Activated B cell treated with CpG ODN at 0.5 μM for 24 hours (primary cell): ENCODE measurements at regions of chr10 and their contacts with region 1.

Region 1: GRCh38 chr10:49538381-49539319 is at the start of gene ERCC6:
- DNase-seq: peak; percentile 92
- ATAC-seq: peak; percentile 82
- H3K4me3 Mint-ChIP-seq: peak within 1 kb of the TSS; percentile 93
- H3K27ac Mint-ChIP-seq: peak within 1 kb of the TSS; percentile 91
- H3K4me1 Mint-ChIP-seq: peaks cover 51% of the 10 kb centered on the region
- H3K27me3 Mint-ChIP-seq: peaks cover 17% of the 10 kb centered on the region
- CTCF ChIP-seq: no peak
- total RNA-seq, gene ERCC6: 37.4 and 46.2 TPM in 2 replicates

Region 2: GRCh38 chr10:48670978-48671913 is 867.4 kb before region 1 on chr10:
- CTCF ChIA-PET with region 1: no interaction called
- POLR2A ChIA-PET with region 1: no interaction called
- intact Hi-C with region 1: loop called (anchors 5 kb)
- DNase-seq: peak; percentile 88
- ATAC-seq: peak; percentile 68
- H3K4me3 Mint-ChIP-seq: peak overlapping the region; percentile 74
- H3K27ac Mint-ChIP-seq: peak overlapping the region; percentile 98
- H3K4me1 Mint-ChIP-seq: peaks cover 76% of the 10 kb centered on the region
- H3K27me3 Mint-ChIP-seq: no peaks in the 10 kb centered on the region
- CTCF ChIP-seq: no peak

Region 3: GRCh38 chr10:49518982-49519578 is 19.6 kb before region 1 on chr10:
- CTCF ChIA-PET with region 1: interaction called, 3 read pairs
- POLR2A ChIA-PET with region 1: interaction called, 4 read pairs
- intact Hi-C with region 1: loop called (anchors 1 kb)
- DNase-seq: no peak
- ATAC-seq: peak; percentile 66
- H3K4me3 Mint-ChIP-seq: no peak overlapping the region
- H3K27ac Mint-ChIP-seq: no peak overlapping the region
- H3K4me1 Mint-ChIP-seq: peaks cover 7% of the 10 kb centered on the region
- H3K27me3 Mint-ChIP-seq: no peaks in the 10 kb centered on the region
- CTCF ChIP-seq: no peak

Region 4: DNA sequence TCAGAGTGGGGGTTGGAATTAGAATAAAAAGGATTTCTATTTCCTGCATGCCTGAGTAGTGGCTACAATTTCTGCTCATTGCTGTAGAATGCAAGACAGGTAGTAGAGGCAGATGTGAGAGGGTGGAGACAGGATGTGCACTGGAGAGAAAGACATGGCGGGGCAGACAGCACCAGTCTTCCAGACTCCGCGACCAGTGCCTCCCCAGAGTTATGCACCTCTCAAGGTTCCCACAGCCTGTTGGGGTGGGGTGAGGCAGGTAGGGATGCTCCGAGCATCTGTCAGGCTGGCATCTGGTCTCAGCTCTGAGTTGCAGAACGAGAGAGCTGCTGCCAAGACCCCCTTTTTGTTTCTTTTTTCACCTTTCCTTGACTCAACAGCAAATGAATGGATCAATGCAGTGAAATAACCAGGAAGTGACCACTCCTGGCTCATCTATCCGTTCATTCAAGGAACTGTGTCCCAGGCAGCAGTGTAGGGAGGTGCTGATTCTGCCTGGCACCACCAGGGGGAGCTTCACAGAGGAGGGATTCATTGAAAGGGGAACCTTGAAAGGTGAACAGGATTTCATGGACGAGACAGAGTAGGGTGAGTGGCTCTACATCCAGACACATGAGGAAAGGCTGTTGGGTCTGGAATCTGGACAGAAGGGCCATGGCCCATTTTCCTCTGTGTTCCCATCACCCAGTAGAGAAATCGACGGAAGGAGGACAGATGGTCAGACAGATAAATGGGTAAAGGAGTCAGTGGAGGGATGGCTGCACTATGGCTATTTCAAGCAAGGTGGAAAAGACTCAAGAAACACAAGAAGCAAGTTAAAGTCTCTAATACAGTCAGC is 54.3 kb after region 1 on chr10:
- CTCF ChIA-PET with region 1: interaction called, 8 read pairs
- POLR2A ChIA-PET with region 1: interaction called, 4 read pairs
- intact Hi-C with region 1: loop called (anchors 2 kb)
- DNase-seq: peak; percentile 37
- ATAC-seq: peak; percentile 81
- H3K4me3 Mint-ChIP-seq: no peak overlapping the region
- H3K27ac Mint-ChIP-seq: no peak overlapping the region
- H3K4me1 Mint-ChIP-seq: no peaks in the 10 kb centered on the region
- H3K27me3 Mint-ChIP-seq: peaks cover 22% of the 10 kb centered on the region
- CTCF ChIP-seq: peak; percentile 44

Region 5: GRCh38 chr10:49791100-49791499 is 252.4 kb after region 1 on chr10:
- CTCF ChIA-PET with region 1: no interaction called
- POLR2A ChIA-PET with region 1: no interaction called
- intact Hi-C with region 1: no loop called
- DNase-seq: no peak
- ATAC-seq: no peak
- H3K4me3 Mint-ChIP-seq: no peak overlapping the region
- H3K27ac Mint-ChIP-seq: no peak overlapping the region
- H3K4me1 Mint-ChIP-seq: no peaks in the 10 kb centered on the region
- H3K27me3 Mint-ChIP-seq: peaks cover 5% of the 10 kb centered on the region
- CTCF ChIP-seq: no peak